Vagina (tissue), 2 donors: ENCODE measurements at regions of chr17 and their contacts with region 1.

Region 1: DNA sequence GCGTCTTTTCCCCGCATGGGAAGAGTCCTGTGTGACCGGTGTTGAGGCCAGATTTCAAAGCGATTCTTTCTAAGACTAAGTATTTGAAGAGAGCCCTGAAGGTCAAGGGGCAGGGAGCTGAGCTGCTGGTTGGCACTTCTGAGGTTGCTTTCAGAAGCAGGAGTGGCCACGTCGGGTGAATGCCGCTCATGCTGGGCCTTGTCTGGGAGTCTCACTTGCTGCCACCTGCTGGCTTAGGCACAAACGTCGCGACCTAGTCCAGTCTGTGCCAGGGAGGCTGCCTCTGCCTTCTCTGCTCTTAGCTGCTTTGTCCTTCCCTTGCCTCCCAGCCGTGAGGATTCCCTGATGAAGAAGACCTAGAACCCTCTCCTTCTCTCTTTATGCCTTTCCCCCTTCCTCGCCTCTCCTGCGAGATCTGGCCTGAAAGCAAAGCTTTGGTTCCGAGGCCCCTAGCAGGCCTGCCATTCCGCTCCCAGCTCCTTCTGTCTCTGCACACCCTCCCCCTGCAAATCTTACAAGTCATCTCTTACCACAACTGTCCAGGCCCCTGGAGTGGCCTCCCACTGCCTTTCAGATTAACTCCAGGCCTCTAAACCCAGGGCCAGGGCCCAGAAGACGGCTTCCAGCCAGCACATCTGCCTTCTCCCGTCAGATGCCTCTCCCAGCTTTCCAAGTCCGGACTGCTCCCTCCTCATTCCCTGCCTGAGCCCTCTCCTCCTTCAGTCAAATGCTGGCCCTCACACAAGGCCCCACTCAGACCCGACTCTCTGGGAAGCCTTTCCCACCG is 11.4 kb downstream of the CTNS start:
- DNase-seq: no peak
- H3K4me3 ChIP-seq: no peak overlapping the region
- H3K27ac ChIP-seq: peak overlapping the region; percentile 18
- H3K4me1 ChIP-seq: peaks cover 9% of the 10 kb centered on the region
- H3K27me3 ChIP-seq: no peaks in the 10 kb centered on the region
- CTCF ChIP-seq: no peak
- POLR2A ChIP-seq: no peak

Region 2: DNA sequence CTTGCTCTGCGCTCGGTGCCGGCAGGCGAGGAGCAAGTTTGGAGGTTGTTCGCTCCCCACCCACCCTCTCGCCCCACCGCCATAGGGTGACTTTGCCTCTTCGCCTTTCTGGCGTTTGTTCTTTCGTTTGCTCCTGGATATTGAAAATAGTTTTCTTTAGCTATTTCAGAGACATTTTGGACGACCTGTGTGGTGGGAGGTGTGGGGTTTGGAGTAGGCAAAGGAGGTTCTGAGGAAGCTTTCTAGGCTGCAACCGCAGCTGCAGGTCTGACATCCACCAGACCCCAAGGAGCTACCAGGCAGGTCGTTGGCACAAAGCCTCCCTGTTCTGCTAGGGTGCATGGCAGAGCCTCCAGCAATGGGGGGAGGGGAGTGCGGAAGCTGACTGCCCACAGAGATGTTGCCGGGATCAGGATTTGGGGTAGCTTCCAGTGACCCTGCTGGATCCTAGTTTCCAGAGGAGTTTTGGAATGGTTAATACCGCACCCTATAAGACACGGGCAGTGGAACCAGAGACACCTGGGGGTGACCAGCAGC is 793.4 kb before region 1 on chr17:
- intact Hi-C with region 1: loop called (anchors 5 kb)
- DNase-seq: no peak
- H3K4me3 ChIP-seq: peak overlapping the region; percentile 57 to 81
- H3K27ac ChIP-seq: no peak overlapping the region
- H3K4me1 ChIP-seq: peaks cover 22% of the 10 kb centered on the region
- H3K27me3 ChIP-seq: no peaks in the 10 kb centered on the region
- CTCF ChIP-seq: no peak
- POLR2A ChIP-seq: no peak

Region 3: GRCh38 chr17:3683054-3683511 is 35.1 kb after region 1 on chr17:
- intact Hi-C with region 1: no loop called
- DNase-seq: no peak
- H3K4me3 ChIP-seq: no peak overlapping the region
- H3K27ac ChIP-seq: no peak overlapping the region
- H3K4me1 ChIP-seq: no peaks in the 10 kb centered on the region
- H3K27me3 ChIP-seq: no peaks in the 10 kb centered on the region
- CTCF ChIP-seq: peak; percentile 49 to 78 (median 62)
- POLR2A ChIP-seq: no peak